Dendritic cell treated with granulocyte-macrophage colony-stimulating factor and Interleukin-4, amounts not matched to agents 40 ng/mL and 50 ng/mL, for 4 days (primary cell): ENCODE measurements at regions of chr16 and their contacts with region 1.

Region 1: GRCh38 chr16:84062734-84063640 is 20.4 kb upstream of the SLC38A8 start:
- H3K4me3 Mint-ChIP-seq: no peak overlapping the region
- H3K27ac Mint-ChIP-seq: no peak overlapping the region
- H3K4me1 Mint-ChIP-seq: peaks cover 5% of the 10 kb centered on the region
- H3K27me3 Mint-ChIP-seq: no peaks in the 10 kb centered on the region

Region 2: DNA sequence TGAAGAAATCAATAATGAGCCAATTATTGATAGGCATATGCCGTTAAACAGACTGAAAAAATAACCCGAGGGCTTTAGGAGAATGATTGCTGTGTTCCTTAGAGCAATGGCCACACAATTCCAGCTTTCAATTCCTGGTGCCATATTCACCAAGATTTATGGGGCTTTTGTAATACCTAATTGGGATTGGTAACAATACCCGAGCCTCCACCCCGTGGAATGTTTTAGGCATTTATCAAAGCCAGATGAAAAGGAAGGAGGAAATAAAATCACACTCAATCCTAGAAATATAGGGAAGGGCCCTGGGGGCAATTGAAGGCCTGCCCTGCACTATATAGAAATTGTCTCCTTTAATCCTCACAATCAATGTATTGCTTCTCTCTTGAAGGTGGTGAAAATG is 206.2 kb before region 1 on chr16:
- intact Hi-C with region 1: no loop called
- H3K4me3 Mint-ChIP-seq: no peak overlapping the region
- H3K27ac Mint-ChIP-seq: no peak overlapping the region
- H3K4me1 Mint-ChIP-seq: peaks cover 5% of the 10 kb centered on the region
- H3K27me3 Mint-ChIP-seq: peaks cover 2% of the 10 kb centered on the region

Region 3: DNA sequence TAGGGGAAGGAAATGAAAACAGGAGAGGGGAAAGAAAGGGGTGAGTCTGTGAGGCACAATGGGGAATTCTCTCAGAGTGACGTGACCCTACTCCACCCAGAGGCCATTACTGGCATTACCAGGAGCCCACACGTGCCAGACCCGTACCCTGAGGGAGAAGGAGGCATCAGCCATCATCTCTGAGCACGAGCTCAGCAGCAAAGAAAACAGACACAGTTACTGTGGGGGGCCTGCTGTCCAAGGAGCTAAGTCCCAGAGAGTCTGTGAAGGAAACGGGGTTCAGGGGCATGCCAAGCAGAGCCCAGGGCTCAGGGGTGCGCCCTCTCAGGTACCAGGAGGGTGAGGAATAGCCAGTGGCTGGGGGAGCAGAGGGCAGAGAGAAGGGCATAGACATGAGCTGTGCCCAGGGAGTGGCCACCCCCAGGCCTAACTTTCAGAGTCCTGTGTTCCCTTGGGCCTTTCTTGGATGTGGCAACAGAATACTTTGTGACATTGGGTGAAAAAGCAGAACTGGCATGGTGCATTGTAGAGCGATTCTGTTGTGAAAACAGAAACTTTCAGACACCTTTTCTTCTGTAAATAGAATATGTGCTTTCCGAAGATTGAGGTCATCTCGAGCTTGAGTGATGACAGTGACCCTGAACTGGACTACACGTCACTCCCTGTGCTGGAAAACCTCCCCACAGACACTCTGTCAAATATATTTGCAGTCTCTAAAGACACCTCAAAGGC is 112.5 kb after region 1 on chr16:
- intact Hi-C with region 1: loop called (anchors 10 kb)
- H3K4me3 Mint-ChIP-seq: no peak overlapping the region
- H3K27ac Mint-ChIP-seq: peak overlapping the region; percentile 68
- H3K4me1 Mint-ChIP-seq: peaks cover 25% of the 10 kb centered on the region
- H3K27me3 Mint-ChIP-seq: peaks cover 7% of the 10 kb centered on the region